ENCODE measurements at regions of chr1 and their contacts with region 1.

Region 1: DNA sequence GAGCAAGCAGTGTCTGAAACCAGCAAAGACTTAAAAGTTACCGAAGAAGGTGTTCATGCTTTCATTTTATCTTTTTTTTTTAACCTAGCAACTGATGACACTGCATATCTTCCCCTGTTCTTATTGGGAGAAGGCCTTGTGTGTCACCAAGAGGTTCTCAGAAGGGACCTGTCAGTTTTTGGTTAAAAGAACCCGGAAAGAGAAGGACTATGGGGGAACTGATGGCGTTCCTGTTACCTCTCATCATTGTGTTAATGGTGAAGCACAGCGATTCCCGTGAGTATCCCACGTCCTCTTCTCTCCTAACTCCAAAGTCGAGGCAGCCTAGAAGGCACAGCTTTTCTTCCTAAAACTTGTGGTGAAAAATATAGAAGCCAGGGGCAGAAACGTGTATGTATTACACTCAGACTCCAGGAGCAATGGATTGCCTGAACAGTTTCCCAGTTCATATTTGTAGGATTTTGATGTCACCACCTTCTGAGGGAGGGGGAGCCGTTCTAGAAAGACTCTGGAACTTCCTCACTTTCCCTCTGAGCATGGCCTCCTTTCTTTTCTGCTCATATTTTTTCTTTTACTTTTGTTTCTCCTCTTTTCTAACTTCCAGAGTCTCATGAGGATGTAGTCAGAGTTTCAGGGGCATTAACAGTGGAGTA is at the start of gene MR1:
- DNase-seq: peak; percentile 51
- H3K4me3 Mint-ChIP-seq: peak within 1 kb of the TSS; percentile 95
- H3K27ac Mint-ChIP-seq: peak within 1 kb of the TSS; percentile 96
- H3K4me1 Mint-ChIP-seq: peaks cover 63% of the 10 kb centered on the region
- H3K27me3 Mint-ChIP-seq: no peaks in the 10 kb centered on the region
- total RNA-seq, gene MR1: 16.6 and 17.6 TPM in 2 replicates

Region 2: GRCh38 chr1:180502360-180503273 is 531.3 kb before region 1 on chr1 and contains the start of gene ACBD6:
- intact Hi-C with region 1: loop called (anchors 5 kb)
- DNase-seq: peak; percentile 81
- H3K4me3 Mint-ChIP-seq: peak within 1 kb of the TSS; percentile 97
- H3K27ac Mint-ChIP-seq: peak within 1 kb of the TSS; percentile 97
- H3K4me1 Mint-ChIP-seq: peaks cover 25% of the 10 kb centered on the region
- H3K27me3 Mint-ChIP-seq: peaks cover 3% of the 10 kb centered on the region
- total RNA-seq, gene ACBD6: 49.4 and 50.9 TPM in 2 replicates

Region 3: GRCh38 chr1:180881806-180882509 is 152.0 kb before region 1 on chr1:
- intact Hi-C with region 1: loop called (anchors 5 kb)
- DNase-seq: no peak
- H3K4me3 Mint-ChIP-seq: no peak overlapping the region
- H3K27ac Mint-ChIP-seq: no peak overlapping the region
- H3K4me1 Mint-ChIP-seq: peaks cover 6% of the 10 kb centered on the region
- H3K27me3 Mint-ChIP-seq: no peaks in the 10 kb centered on the region

Region 4: DNA sequence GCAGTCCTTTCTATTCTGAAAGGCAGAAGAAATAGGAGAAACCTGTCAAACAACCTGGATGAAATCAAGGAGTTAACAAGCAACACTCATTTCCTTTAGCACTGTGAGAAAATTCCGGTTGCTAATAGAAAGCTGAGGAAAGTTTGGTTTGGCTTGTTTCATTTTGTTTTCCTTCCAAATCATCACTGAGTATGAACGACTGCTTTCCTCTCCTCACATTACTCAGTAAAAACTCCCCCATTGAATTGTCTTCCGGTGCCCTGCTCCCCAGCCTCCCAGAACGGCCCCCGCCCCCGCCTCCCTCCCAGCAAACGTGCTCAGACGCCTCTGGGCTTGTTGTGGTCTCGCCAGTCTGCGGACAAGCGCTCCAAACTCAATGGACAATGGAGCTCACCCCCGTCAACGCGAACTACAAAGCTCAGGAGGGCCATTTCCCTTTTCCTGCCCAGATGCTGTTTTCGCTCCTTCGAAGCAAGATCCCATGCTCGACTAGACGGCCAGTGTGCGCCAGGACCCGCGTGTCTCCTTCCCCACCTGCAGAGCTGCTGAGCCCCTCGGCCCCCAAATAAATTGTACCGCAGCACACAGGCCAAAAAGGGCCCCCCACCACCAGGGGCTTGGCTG is 12.0 kb before region 1 on chr1:
- intact Hi-C with region 1: loop called (anchors 1 kb)
- DNase-seq: peak; percentile 37
- H3K4me3 Mint-ChIP-seq: peak overlapping the region; percentile 96
- H3K27ac Mint-ChIP-seq: peak overlapping the region; percentile 97
- H3K4me1 Mint-ChIP-seq: peaks cover 46% of the 10 kb centered on the region
- H3K27me3 Mint-ChIP-seq: peaks cover 15% of the 10 kb centered on the region

Region 5: GRCh38 chr1:181166377-181167196 is 132.7 kb after region 1 on chr1:
- intact Hi-C with region 1: loop called (anchors 1 kb)
- DNase-seq: peak; percentile 62
- H3K4me3 Mint-ChIP-seq: no peak overlapping the region
- H3K27ac Mint-ChIP-seq: no peak overlapping the region
- H3K4me1 Mint-ChIP-seq: peaks cover 6% of the 10 kb centered on the region
- H3K27me3 Mint-ChIP-seq: peaks cover 34% of the 10 kb centered on the region

Measured in activated T-helper 1 cell treated with anti-CD3 and anti-CD28 coated beads, Interleukin-12 subunit alpha, Interleukin-12 subunit beta, Interleukin-2, Interleukin-4 antibody, amounts not matched to agents 30 ng/mL and 10 ng/mL and 1 ng/mL, durations not matched to agents 14 hours and 24 hours and 36 hours (primary cell).